ENCODE measurements at regions of chr7 and their contacts with region 1.

Region 1: GRCh38 chr7:37833107-37833817 is 15.1 kb upstream of the NME8 start:
- ATAC-seq: peak in 2 of 8 experiments; percentile 28 to 36
- H3K4me3 ChIP-seq: no peak overlapping the region
- H3K27ac ChIP-seq: no peak overlapping the region
- H3K4me1 ChIP-seq: no peaks in the 10 kb centered on the region

Region 2: GRCh38 chr7:37448636-37449361 is 384.5 kb before region 1 on chr7 and contains the start of gene ELMO1:
- in situ Hi-C with region 1: loop called in 1 of 9 experiments (anchors 25 kb)
- ATAC-seq: peak; percentile 79 to 91 (median 88)
- H3K4me3 ChIP-seq: peak within 1 kb of the TSS; percentile 69 to 92 (median 72)
- H3K27ac ChIP-seq: peak within 1 kb of the TSS; percentile 48 to 70
- H3K4me1 ChIP-seq: peaks cover 13 to 14% of the 10 kb centered on the region in 2 donors
- total RNA-seq, gene ELMO1: 4.2 to 121 (median 40.0) TPM

Region 3: DNA sequence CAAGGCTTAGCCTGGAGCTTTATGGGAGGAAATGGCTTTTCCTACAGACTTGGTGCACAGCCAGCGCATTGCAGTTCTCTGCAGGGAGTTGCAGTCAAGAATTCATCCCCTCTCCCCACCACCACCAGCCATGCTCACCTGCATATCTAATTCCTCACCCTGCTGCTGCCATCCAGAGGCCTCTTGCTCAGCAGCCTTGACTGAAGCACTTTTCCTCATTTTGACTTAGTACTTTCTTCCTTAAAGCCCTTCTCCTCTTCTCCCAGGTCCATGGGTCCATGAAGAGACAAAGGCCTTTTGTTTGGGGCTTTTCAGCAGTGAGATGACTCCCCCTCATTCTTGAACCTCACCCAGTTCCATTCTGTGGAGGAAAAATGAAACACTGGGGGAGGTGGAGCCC is 189.4 kb before region 1 on chr7:
- in situ Hi-C with region 1: loop called in 1 of 9 experiments (anchors 25 kb)
- ATAC-seq: peak in 6 of 8 experiments; percentile 53 to 88 (median 65)
- H3K4me3 ChIP-seq: no peak overlapping the region
- H3K27ac ChIP-seq: no peak overlapping the region
- H3K4me1 ChIP-seq: no peaks in the 10 kb centered on the region

Region 4: GRCh38 chr7:38169847-38170246 is 336.6 kb after region 1 on chr7:
- in situ Hi-C with region 1: no loop called
- ATAC-seq: peak; percentile 50 to 99 (median 78)
- H3K4me3 ChIP-seq: no peak overlapping the region
- H3K27ac ChIP-seq: no peak overlapping the region
- H3K4me1 ChIP-seq: no peaks in the 10 kb centered on the region

Measured in motor neuron (in vitro differentiated cells).